ENCODE measurements at regions of chr3 and their contacts with region 1.

Region 1: GRCh38 chr3:52663098-52663497 is 22.6 kb downstream of the PBRM1 start:
- DNase-seq: no peak
- ATAC-seq: no peak
- H3K4me3 ChIP-seq: no peak overlapping the region
- H3K27ac ChIP-seq: no peak overlapping the region
- H3K4me1 ChIP-seq: no peaks in the 10 kb centered on the region
- H3K27me3 ChIP-seq: no peaks in the 10 kb centered on the region
- CTCF ChIP-seq: no peak

Region 2: GRCh38 chr3:52625041-52625440 is 38.1 kb before region 1 on chr3:
- intact Hi-C with region 1: loop called in 1 of 2 experiments (anchors 5 kb)
- DNase-seq: no peak
- ATAC-seq: no peak
- H3K4me3 ChIP-seq: no peak overlapping the region
- H3K27ac ChIP-seq: no peak overlapping the region
- H3K4me1 ChIP-seq: no peaks in the 10 kb centered on the region
- H3K27me3 ChIP-seq: no peaks in the 10 kb centered on the region
- CTCF ChIP-seq: no peak